WTC11 (cell line): ENCODE measurements at regions of chr2 and their contacts with region 1.

Region 1: DNA sequence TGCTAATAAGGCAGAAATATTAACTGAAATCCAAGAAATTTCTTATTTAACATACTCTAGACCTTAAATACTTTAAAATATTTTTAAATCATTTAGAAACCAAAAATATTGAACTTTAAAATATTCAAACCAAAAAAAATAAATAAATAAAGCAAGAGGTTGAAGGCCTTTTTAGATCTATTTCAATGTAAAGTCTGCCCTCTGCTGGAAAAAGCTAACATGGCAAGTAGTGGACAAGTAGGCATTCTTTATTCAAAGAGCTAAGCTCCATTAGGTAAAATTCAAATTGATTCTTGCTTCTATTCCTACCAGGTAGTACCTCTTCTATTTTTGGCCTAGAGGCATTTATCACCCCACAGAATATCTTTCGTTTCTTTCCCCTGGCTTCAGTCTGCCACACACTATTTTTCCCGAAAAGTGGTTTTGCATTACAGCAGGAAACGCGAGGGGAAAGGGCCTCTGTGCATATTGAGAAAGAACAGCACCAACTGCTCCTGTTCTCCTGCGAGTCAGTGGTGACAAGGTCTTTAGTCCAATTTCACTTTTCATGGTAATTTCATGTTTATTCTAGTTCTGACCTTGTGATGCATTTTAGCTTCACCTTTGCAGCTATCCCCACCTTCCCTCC is 20.4 kb downstream of the IFIH1 start:
- DNase-seq: peak; percentile 33
- ATAC-seq: peak; percentile 64
- H3K4me3 Mint-ChIP-seq: no peak overlapping the region
- H3K27ac Mint-ChIP-seq: no peak overlapping the region
- H3K4me1 Mint-ChIP-seq: no peaks in the 10 kb centered on the region
- H3K27me3 Mint-ChIP-seq: no peaks in the 10 kb centered on the region
- CTCF ChIP-seq: peak; percentile 61

Region 2: DNA sequence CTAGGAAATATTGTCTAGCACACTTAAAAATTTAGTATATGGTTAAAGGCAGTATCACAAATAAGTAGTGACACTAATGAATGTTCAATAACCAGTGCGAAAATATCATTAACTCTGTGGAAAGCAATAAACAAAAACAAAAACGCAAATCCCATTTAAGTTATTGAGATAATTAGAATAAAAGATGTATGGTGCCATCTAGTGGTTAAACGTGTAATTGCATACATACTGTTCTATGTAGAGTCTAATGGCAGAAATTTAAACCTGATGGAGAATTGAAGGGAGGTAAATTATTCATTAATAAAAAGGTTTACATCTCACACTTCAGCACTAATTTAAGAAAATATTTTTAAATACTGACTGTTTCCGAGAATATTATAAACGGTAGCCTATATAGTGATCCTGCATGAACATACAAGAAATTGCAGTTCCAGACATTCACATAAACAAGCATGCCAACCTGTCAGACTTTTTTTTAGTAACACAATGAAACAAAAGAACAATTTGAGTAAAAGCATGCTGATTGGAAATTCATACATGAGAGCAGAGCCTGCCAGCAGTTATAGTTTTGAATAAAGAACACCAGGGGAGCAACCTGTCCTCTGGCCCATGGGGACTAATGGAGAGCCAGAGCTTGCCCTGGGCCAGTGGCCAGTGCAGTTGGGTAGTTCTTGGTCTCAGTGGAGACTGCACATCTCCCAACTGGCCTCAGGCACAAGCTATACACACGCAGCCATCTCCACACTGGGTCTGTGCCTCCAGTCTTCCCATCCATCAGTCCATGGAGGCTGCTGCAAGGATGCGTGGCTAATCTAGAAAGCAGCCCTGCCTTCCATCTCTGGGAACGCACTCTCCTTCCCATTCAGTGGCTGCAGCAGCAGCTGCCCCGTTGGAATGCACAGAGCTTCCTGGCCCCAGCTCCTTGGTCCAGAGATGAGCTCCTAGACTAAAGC is 174.0 kb before region 1 on chr2:
- CTCF ChIA-PET with region 1: interaction called, 15 read pairs
- POLR2A ChIA-PET with region 1: no interaction called
- DNase-seq: no peak
- ATAC-seq: peak; percentile 43
- H3K4me3 Mint-ChIP-seq: no peak overlapping the region
- H3K27ac Mint-ChIP-seq: no peak overlapping the region
- H3K4me1 Mint-ChIP-seq: 0 out of 2 replicates have a peak, but pooled peaks cover 4% of the 10 kb centered on the region
- H3K27me3 Mint-ChIP-seq: no peaks in the 10 kb centered on the region
- CTCF ChIP-seq: peak; percentile 55

Region 3: GRCh38 chr2:162182395-162182794 is 115.6 kb before region 1 on chr2:
- CTCF ChIA-PET with region 1: interaction called, 11 read pairs
- POLR2A ChIA-PET with region 1: no interaction called
- DNase-seq: no peak
- ATAC-seq: no peak
- H3K4me3 Mint-ChIP-seq: no peak overlapping the region
- H3K27ac Mint-ChIP-seq: no peak overlapping the region
- H3K4me1 Mint-ChIP-seq: peaks cover 28% of the 10 kb centered on the region
- H3K27me3 Mint-ChIP-seq: no peaks in the 10 kb centered on the region
- CTCF ChIP-seq: no peak

Region 4: GRCh38 chr2:162280654-162281053 is 17.4 kb before region 1 on chr2:
- CTCF ChIA-PET with region 1: interaction called, 24 read pairs
- POLR2A ChIA-PET with region 1: no interaction called
- DNase-seq: no peak
- ATAC-seq: no peak
- H3K4me3 Mint-ChIP-seq: no peak overlapping the region
- H3K27ac Mint-ChIP-seq: no peak overlapping the region
- H3K4me1 Mint-ChIP-seq: peaks cover 3% of the 10 kb centered on the region; the same call in 1 of the 2 replicates
- H3K27me3 Mint-ChIP-seq: no peaks in the 10 kb centered on the region
- CTCF ChIP-seq: no peak

Region 5: DNA sequence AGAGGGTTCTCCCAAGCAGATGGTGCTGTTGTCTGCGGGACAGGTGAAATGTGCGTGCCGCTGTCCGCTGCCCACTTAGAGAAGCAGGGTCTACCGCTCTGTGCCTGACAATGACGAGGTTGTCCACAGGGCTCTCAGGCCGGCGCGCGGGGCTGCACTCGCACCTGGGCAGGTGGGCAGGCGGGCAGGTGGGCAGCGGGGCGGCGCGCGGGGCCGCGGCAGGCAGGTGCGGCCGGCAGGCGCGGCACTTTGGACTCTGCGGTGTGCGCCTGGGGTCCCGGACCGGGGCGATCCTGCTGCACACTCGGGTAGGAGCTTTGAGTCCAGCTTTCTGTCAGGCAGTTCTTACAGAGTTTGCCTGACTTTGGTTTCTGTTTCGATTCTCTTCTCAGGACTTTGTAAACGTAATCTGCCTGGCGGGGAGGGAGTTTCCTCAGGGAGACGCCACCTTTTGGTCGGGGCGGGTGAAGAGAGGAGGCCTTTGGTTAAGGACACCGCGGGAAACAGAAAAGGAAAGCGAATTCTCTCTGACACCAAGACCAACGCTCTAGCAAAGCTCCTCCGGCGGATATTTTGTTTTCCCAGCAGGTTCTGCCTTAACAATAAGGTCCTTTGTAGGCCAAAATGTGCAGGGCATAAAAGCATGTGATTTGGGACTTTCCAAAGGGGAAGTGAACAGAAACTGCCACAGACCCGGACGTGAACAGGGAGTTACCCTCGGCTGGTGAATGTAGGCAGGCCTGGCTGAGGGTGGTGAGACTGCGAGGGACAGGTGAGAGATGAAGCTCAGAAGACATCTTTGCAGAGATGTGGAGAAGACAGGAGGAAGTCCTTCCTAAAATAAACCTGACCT is 20.5 kb after region 1 on chr2 and contains the start of gene IFIH1:
- CTCF ChIA-PET with region 1: interaction called, 17 read pairs
- POLR2A ChIA-PET with region 1: no interaction called
- DNase-seq: peak; percentile 70
- ATAC-seq: peak; percentile 87
- H3K4me3 Mint-ChIP-seq: peak within 1 kb of the TSS; percentile 82
- H3K27ac Mint-ChIP-seq: peak within 1 kb of the TSS; percentile 50; the same call in 1 of the 2 replicates
- H3K4me1 Mint-ChIP-seq: peaks cover 23% of the 10 kb centered on the region
- H3K27me3 Mint-ChIP-seq: peaks cover 21% of the 10 kb centered on the region
- CTCF ChIP-seq: no peak
- total RNA-seq, gene IFIH1: 1.3 to 2.3 TPM (median 2.1 TPM) in 3 replicates